Mammary epithelial cell (primary cell): ENCODE measurements at regions of chr16 and their contacts with region 1.

Region 1: GRCh38 chr16:26149364-26150190 is 457.8 kb downstream of the HS3ST4 start:
- DNase-seq: no peak
- H3K4me3 ChIP-seq: no peak overlapping the region
- H3K27ac ChIP-seq: no peak overlapping the region
- H3K4me1 ChIP-seq: no peaks in the 10 kb centered on the region
- H3K27me3 ChIP-seq: no peaks in the 10 kb centered on the region
- CTCF ChIP-seq: no peak

Region 2: DNA sequence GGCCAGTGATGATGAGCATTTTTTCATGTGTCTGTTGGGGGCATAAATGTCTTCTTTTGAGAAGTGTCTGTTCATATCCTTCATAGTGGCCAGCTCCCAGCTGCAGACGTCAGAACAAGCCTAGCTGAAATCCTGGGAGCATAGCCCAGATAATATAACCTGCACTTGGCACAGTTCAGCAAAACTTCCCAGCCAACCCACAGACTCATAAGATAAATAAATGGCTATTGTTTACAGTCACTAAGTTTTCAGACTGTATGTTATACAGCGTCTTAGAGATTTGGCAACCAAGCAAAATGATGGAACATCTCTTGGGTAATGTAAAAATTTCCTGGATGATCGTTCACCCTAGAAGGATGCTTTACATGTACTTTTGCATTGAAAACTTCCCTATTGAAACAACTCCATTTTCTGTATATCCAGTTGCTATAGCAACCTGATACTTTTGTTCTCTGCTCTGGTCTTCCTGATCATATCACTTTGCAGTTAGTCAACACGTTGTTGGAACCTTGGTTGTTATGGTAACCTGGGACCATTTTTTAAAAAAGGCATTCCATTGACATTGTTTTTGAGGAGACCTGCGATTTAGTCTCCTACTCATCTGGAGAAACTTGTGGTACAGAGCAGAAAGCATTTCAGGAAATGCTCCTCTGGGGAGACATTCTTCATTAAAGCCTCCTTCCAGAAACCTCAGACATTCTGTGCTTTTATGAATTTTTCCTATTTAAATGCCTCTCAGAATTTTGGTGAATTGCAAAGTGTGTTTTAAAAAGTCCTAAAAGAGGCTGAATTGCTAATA is 79.1 kb before region 1 on chr16:
- CTCF ChIA-PET with region 1: no interaction called
- dilution Hi-C with region 1: loop called (anchors 10 kb)
- in situ Hi-C with region 1: no loop called
- intact Hi-C with region 1: no loop called
- DNase-seq: no peak
- H3K4me3 ChIP-seq: no peak overlapping the region
- H3K27ac ChIP-seq: no peak overlapping the region
- H3K4me1 ChIP-seq: no peaks in the 10 kb centered on the region
- H3K27me3 ChIP-seq: no peaks in the 10 kb centered on the region
- CTCF ChIP-seq: no peak